Heart right ventricle (tissue), 16 donors: ENCODE measurements at regions of chr5 and their contacts with region 1.

Region 1: GRCh38 chr5:164202338-164202737 is 696.9 kb downstream of the MAT2B start:
- DNase-seq: no peak
- ATAC-seq: no peak
- H3K4me3 ChIP-seq: no peak overlapping the region
- H3K27ac ChIP-seq: no peak overlapping the region
- H3K4me1 ChIP-seq: no peaks in the 10 kb centered on the region
- H3K27me3 ChIP-seq: no peaks in the 10 kb centered on the region
- CTCF ChIP-seq: no peak

Region 2: DNA sequence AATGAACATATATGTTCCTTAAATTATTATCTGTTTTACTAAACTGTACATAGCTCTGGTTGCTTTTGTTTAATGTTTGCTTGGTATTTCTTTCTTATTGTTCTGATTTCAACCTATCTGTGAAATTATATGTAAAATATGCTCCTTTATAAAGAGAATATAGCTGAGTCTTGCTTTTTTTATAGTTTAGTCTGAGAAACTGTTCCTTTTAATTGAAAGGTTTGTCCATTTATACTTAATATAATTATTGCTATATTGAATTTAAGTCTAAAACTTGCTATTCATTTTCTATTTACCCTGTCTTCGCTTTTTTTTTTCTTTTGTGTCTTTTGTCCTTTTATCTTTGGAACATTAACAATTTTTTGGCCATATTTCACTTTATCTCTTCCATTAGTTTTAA is 15.1 kb after region 1 on chr5:
- intact Hi-C with region 1: loop called in 1 of 10 experiments (anchors 2 kb)
- DNase-seq: no peak
- ATAC-seq: no peak
- H3K4me3 ChIP-seq: no peak overlapping the region
- H3K27ac ChIP-seq: no peak overlapping the region
- H3K4me1 ChIP-seq: no peaks in the 10 kb centered on the region
- H3K27me3 ChIP-seq: no peaks in the 10 kb centered on the region
- CTCF ChIP-seq: no peak

Region 3: DNA sequence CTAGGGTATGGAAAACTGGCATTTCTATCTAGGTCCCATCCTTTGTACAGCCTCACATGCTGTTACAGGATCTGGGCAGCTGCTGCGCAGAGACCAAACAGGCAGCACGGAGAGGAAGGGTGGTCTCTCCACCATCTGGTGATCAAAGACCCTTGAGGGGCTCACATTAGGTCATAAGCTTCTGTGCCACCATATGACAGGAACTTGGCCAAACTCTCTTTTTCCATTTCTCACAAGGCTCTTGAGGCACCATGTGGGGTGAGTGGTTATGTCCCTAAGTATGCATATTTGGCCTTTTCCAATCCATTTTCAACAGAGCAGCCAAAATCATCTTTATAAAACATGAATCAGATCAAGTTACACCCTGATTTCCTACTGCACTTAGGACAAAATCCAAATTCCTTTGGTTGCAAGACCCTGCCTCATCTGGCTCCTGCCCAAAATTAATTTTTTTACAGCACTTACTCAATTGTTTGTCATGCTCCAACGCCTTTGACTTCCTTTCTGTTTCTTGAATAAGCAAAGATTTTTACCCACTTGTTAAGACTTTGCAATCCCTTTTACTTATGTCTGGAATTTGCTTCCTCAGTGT is 33.1 kb after region 1 on chr5:
- intact Hi-C with region 1: no loop called
- DNase-seq: no peak
- ATAC-seq: no peak
- H3K4me3 ChIP-seq: no peak overlapping the region
- H3K27ac ChIP-seq: no peak overlapping the region
- H3K4me1 ChIP-seq: peaks cover 0 to 7% (median 0%) of the 10 kb centered on the region in 9 donors
- H3K27me3 ChIP-seq: no peaks in the 10 kb centered on the region
- CTCF ChIP-seq: no peak

Region 4: DNA sequence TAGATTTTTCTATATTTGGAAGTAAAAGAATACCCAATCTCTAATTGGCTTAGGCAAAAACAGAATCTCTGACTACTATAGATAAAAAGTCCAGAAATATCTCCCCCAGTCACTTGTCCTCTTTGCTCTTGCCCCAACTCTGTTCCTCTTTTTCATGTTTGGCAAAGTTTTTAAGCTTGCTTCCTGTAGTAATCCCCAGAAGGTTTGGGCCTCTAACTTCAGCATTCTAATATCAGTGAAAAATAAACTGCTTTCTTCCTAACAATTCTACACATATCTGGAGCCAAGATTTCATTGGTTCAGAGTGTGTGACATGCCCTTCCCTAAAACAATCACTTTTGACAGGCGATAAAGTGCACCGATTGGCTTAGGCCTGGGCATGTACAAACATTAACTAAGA is 983.4 kb after region 1 on chr5:
- intact Hi-C with region 1: no loop called
- DNase-seq: no peak
- ATAC-seq: no peak
- H3K4me3 ChIP-seq: no peak overlapping the region
- H3K27ac ChIP-seq: peak overlapping the region in 1 of 10 donors; percentile 40
- H3K4me1 ChIP-seq: peaks cover 0 to 13% (median 0%) of the 10 kb centered on the region in 9 donors
- H3K27me3 ChIP-seq: no peaks in the 10 kb centered on the region
- CTCF ChIP-seq: no peak